Transverse colon (tissue), 4 donors: ENCODE measurements at regions of chrX and their contacts with region 1.

Region 1: GRCh38 chrX:63784346-63784901 is 590 bp downstream of the ARHGEF9 start:
- DNase-seq: peak; percentile 17
- H3K4me3 ChIP-seq: peak overlapping the region; percentile 22 to 57 (median 40)
- H3K27ac ChIP-seq: peak overlapping the region; percentile 37 to 75 (median 67)
- H3K4me1 ChIP-seq: peaks cover 0 to 6% (median 0%) of the 10 kb centered on the region in 4 donors
- H3K27me3 ChIP-seq: no peaks in the 10 kb centered on the region
- CTCF ChIP-seq: no peak
- EP300 ChIP-seq: no peak
- POLR2A ChIP-seq: no peak

Region 2: DNA sequence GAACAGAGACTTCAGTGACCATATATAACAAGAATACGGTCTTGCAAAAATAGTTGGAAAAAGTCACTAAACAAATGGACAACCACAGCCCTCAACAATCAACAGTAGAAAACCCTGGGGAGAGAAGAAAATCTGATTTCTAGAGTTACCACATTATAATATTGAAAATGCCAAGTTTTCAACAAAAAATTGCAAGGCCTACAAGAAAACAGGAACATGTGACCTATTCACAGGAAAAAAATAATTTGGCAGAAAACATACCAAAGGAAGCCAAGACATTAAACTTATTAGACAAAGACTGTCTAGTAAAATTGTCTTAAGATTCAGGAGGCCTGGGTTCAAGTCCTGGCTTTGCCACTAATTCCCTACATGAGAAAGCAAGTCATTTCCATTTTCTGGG is 64.1 kb before region 1 on chrX:
- in situ Hi-C with region 1: no loop called
- intact Hi-C with region 1: loop called (anchors 1 kb)
- DNase-seq: no peak
- H3K4me3 ChIP-seq: no peak overlapping the region
- H3K27ac ChIP-seq: no peak overlapping the region
- H3K4me1 ChIP-seq: no peaks in the 10 kb centered on the region
- H3K27me3 ChIP-seq: no peaks in the 10 kb centered on the region
- CTCF ChIP-seq: no peak
- EP300 ChIP-seq: no peak
- POLR2A ChIP-seq: no peak